RWPE1 (cell line): ENCODE measurements at regions of chr1 and their contacts with region 1.

Region 1: DNA sequence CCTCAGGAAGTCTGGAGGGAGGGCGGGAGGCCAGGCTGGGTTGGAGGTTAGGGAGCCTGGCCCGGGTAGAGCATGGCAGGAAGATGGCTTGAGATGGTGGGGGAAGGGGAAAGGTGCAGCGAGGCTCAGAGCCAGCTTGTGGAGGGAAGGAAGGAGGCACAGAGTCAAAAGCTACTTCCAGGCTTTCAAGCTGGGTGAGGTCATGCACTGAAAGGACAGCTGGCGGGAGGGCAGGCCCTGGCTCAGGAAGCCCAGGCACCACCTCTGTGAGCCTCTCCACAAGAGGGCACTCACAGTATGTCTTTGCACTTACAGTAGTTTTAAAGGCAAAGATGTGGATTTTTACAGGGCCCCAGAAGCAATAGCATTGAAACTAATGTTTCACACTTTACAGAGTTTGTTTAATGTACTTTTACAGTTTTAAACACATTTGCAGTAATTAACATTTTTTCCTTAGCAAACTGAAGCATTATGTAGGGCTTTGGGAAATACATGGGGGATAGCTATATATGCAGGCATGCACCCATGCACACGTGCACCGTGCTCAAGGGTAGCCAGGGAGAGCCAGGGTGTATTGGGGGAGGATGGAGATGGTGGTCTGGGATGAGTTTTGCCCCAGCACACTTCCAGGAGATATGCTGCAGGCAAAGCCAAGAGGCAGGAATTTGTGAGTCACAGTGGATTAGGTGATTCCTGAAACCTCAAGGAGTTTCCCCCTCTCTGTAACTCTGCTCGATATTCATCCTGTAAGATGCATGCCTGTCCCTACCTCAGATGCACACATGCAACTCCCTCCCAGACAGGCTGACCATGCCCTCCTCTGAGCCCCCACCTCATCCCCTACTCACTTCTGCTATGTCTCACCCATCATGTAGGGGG is 6.1 kb upstream of the ADAM15 start:
- DNase-seq: peak; percentile 66
- H3K27ac ChIP-seq: peak overlapping the region; percentile 77
- CTCF ChIP-seq: peak; percentile 74

Region 2: GRCh38 chr1:155001675-155002463 is 43.2 kb before region 1 on chr1:
- CTCF ChIA-PET with region 1: no interaction called
- POLR2A ChIA-PET with region 1: interaction called, 12 read pairs
- DNase-seq: peak; percentile 99
- H3K27ac ChIP-seq: peak overlapping the region; percentile 100
- CTCF ChIP-seq: peak; percentile 69

Region 3: GRCh38 chr1:155061381-155062150 is 16.5 kb after region 1 on chr1:
- CTCF ChIA-PET with region 1: interaction called, 16 read pairs
- POLR2A ChIA-PET with region 1: no interaction called
- DNase-seq: peak; percentile 83
- H3K27ac ChIP-seq: peak overlapping the region; percentile 92
- CTCF ChIP-seq: peak; percentile 98